Activated naive CD4-positive, alpha-beta T cell treated with anti-CD3 and anti-CD28 coated beads for 36 hours (primary cell): ENCODE measurements at regions of chr15 and their contacts with region 1.

Region 1: GRCh38 chr15:57767481-57767880 is 61.0 kb downstream of the POLR2M start:
- DNase-seq: no peak
- H3K4me3 Mint-ChIP-seq: no peak overlapping the region
- H3K27ac Mint-ChIP-seq: no peak overlapping the region
- H3K4me1 Mint-ChIP-seq: peaks cover 16% of the 10 kb centered on the region
- H3K27me3 Mint-ChIP-seq: no peaks in the 10 kb centered on the region

Region 2: DNA sequence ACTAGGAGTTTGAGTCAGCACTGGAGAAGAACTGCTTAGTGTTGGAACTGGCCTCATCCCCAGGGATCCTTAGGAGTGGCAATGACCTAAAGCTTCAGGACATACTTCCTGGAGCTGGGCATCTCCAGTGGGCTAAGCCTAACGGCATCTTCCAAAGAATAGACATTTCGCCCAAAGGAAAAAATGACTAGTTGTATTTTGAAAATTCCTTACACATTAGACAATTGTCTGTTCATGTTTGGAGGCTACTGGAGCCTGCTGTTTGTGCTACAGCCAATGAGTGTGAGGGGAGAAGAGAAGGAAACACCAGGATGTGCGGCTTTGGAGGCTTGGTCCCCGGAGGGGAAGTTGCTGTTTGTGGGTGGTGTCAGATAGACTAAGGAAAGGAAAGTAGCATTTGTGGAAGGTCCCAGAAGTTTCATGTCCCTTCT is 16.6 kb after region 1 on chr15:
- CTCF ChIA-PET with region 1: no interaction called
- intact Hi-C with region 1: loop called (anchors 1 kb)
- DNase-seq: no peak
- H3K4me3 Mint-ChIP-seq: no peak overlapping the region
- H3K27ac Mint-ChIP-seq: no peak overlapping the region
- H3K4me1 Mint-ChIP-seq: peaks cover 4% of the 10 kb centered on the region
- H3K27me3 Mint-ChIP-seq: peaks cover 12% of the 10 kb centered on the region